ENCODE measurements at regions of chr10 and their contacts with region 1.

Region 1: GRCh38 chr10:784403-785088 is 95.1 kb upstream of the DIP2C start:
- DNase-seq: peak; percentile 87
- H3K4me3 ChIP-seq: peak overlapping the region in 1 of 2 experiments; percentile 40; a peak in 2 of 4 replicates
- H3K27ac ChIP-seq: no peak overlapping the region
- H3K4me1 ChIP-seq: peaks cover 0 to 6% of the 10 kb centered on the region in 2 experiments; a peak in 1 of 4 replicates
- H3K27me3 ChIP-seq: no peaks in the 10 kb centered on the region
- CTCF ChIP-seq: peak; percentile 35
- EP300 ChIP-seq: no peak
- RAD21 ChIP-seq: peak; percentile 35

Region 2: GRCh38 chr10:505419-505818 is 279.1 kb before region 1 on chr10:
- CTCF ChIA-PET with region 1: interaction called, 54 read pairs
- POLR2A ChIA-PET with region 1: no interaction called
- DNase-seq: no peak
- H3K4me3 ChIP-seq: no peak overlapping the region
- H3K27ac ChIP-seq: no peak overlapping the region
- H3K4me1 ChIP-seq: peaks cover 3 to 11% of the 10 kb centered on the region in 2 experiments; a peak in 3 of 4 replicates
- H3K27me3 ChIP-seq: no peaks in the 10 kb centered on the region
- CTCF ChIP-seq: no peak
- EP300 ChIP-seq: no peak
- RAD21 ChIP-seq: no peak

Region 3: GRCh38 chr10:511101-511848 is 273.3 kb before region 1 on chr10:
- CTCF ChIA-PET with region 1: interaction called, 54 read pairs
- POLR2A ChIA-PET with region 1: no interaction called
- DNase-seq: peak; percentile 91
- H3K4me3 ChIP-seq: peak overlapping the region in 1 of 2 experiments; percentile 14; a peak in 1 of 4 replicates
- H3K27ac ChIP-seq: peak overlapping the region; percentile 43 to 49; a peak in 3 of 4 replicates
- H3K4me1 ChIP-seq: peaks cover 0 to 8% of the 10 kb centered on the region in 2 experiments; a peak in 1 of 4 replicates
- H3K27me3 ChIP-seq: no peaks in the 10 kb centered on the region
- CTCF ChIP-seq: peak; percentile 97
- EP300 ChIP-seq: no peak
- RAD21 ChIP-seq: peak; percentile 97

Region 4: GRCh38 chr10:520406-520795 is 264.1 kb before region 1 on chr10:
- CTCF ChIA-PET with region 1: interaction called, 54 read pairs
- POLR2A ChIA-PET with region 1: no interaction called
- DNase-seq: no peak
- H3K4me3 ChIP-seq: no peak overlapping the region
- H3K27ac ChIP-seq: no peak overlapping the region
- H3K4me1 ChIP-seq: peaks cover 0 to 34% of the 10 kb centered on the region in 2 experiments; a peak in 2 of 4 replicates
- H3K27me3 ChIP-seq: no peaks in the 10 kb centered on the region
- CTCF ChIP-seq: no peak
- EP300 ChIP-seq: no peak
- RAD21 ChIP-seq: no peak

Region 5: GRCh38 chr10:624605-625332 is 159.8 kb before region 1 on chr10:
- CTCF ChIA-PET with region 1: no interaction called
- POLR2A ChIA-PET with region 1: no interaction called
- DNase-seq: peak; percentile 59
- H3K4me3 ChIP-seq: peak overlapping the region in 1 of 2 experiments; percentile 41; a peak in 1 of 4 replicates
- H3K27ac ChIP-seq: peak overlapping the region; percentile 68 to 69
- H3K4me1 ChIP-seq: peaks cover 13 to 50% of the 10 kb centered on the region in 2 experiments; a peak in 3 of 4 replicates
- H3K27me3 ChIP-seq: no peaks in the 10 kb centered on the region
- CTCF ChIP-seq: no peak
- EP300 ChIP-seq: no peak
- RAD21 ChIP-seq: no peak

Measured in SK-N-SH (cell line).